Activated CD8-positive, alpha-beta memory T cell treated with anti-CD3 and anti-CD28 coated beads, Interleukin-2, amount 10 ng/mL, durations not matched to agents 7 days and 5 days (primary cell): ENCODE measurements at regions of chr2 and their contacts with region 1.

Region 1: DNA sequence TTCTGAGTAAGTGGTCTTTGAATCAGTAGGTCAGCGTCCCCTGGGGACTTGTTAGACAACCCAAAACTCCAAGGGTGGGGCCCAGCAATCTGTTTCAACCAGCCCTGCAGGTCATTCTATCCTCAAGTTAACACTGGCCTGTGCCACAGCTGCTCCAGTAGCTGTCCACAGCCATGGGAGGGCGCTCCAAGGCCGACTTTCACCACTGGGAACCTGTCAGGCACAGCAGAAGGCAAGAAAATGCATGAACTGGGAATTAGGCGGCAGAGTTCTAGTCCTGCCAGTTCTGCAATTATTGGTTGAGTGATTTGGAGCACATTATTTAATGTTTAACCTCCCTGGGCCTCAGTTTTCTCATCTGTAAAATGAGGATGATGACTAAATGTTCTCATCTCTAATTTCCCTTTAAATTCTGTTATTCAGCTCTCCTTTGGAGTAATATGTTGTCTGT is 17.4 kb upstream of the MRPL33 start:
- DNase-seq: peak; percentile 88
- ATAC-seq: peak; percentile 99
- H3K4me3 Mint-ChIP-seq: no peak overlapping the region
- H3K27ac Mint-ChIP-seq: no peak overlapping the region
- H3K4me1 Mint-ChIP-seq: peaks cover 9% of the 10 kb centered on the region
- H3K27me3 Mint-ChIP-seq: peaks cover 5% of the 10 kb centered on the region

Region 2: DNA sequence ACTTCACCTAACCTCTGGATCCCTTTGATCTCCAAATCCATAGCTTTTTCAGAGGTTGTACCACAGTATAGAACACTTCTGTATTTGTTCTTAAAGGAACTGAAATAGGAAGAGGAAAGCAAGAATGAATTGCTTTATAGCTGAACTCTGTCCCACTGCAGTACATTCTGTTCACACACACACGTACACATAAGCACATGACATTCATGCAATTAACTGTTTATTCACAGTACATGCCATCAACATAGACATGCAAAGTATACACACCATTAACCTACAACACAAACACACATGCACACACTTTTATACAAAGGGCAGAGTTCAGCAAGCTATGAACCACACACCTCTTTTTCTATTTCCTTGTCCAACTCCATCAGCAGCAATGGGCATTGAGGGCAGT is 60.6 kb after region 1 on chr2:
- CTCF ChIA-PET with region 1: no interaction called
- DNase-seq: no peak
- ATAC-seq: no peak
- H3K4me3 Mint-ChIP-seq: no peak overlapping the region
- H3K27ac Mint-ChIP-seq: no peak overlapping the region
- H3K4me1 Mint-ChIP-seq: peaks cover 13% of the 10 kb centered on the region
- H3K27me3 Mint-ChIP-seq: no peaks in the 10 kb centered on the region

Region 3: DNA sequence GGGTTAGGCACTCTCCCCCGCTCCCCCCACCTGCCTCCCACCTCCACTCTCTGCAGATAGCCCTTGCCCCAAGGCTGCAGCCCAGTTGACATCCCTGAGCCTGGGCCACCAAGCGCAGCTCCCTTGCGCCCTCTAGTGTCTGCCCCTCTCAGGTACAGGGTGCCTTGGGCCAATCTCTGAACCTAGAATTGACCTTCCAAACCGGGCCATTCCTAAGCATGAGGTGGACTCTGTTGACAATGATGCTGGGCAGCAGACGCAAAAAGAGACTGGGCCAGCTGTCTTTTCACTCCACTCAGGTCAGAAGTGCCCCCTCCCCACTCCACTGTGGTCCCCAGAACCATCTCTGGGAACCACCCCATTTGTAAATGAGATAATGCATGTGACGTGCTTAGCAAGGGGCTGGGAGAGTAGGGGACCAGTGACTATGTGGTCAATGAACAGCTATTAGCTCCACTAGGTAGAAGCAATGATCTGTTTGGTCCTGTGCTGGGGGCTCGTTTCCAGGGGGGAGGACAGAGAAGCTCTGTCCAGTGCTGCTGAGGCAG is 698.4 kb after region 1 on chr2:
- CTCF ChIA-PET with region 1: interaction called, 14 read pairs
- DNase-seq: peak; percentile 89
- ATAC-seq: peak; percentile 80
- H3K4me3 Mint-ChIP-seq: no peak overlapping the region
- H3K27ac Mint-ChIP-seq: peak overlapping the region; percentile 41
- H3K4me1 Mint-ChIP-seq: peaks cover 53% of the 10 kb centered on the region
- H3K27me3 Mint-ChIP-seq: no peaks in the 10 kb centered on the region